ENCODE measurements at regions of chr2 and their contacts with region 1.

Region 1: DNA sequence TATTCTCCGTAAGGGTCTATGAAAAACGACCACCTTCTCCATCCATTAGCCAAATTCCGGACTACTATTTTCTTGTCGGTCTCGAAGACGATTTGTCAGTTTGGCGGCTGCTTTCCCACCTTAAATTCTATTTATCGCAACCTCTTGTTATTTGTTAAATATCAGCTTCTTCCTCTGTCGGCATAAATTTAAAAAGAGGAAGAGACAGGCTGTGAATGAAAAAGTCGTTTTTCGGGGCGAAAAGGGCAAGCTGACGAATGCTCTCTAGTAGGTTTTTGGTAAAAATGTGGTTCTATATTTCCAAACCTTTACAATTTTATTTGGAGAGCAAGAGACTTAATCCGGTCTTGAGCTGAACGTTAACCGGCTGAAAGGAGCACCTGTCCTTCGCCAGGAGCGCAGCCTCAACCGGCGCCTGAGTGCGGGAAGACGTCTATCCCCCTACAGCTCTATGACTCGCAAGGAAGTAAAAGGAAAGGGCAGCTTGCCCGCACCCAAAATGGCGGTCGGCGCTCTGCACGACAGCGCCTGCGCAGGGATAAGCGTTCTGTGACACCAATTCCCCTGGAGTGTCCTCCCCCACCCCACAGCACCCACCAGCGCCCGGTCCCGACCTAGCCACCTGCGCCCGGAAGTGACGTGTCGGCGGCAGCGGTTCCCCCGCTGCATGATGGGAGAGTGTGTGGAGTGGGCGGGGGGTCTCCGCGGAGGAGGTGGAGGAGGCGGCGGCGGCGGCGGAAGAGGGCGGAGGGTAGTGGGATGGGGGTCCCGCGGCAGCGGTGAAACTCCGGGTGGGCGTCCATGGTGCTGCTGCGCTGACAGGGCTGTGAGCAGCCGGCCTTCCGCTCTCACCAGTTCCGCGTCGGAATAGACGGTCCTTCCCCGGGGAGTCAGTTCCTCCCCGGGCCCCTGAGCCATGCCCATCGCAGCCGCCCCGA is at the start of gene AFTPH:
- DNase-seq: peak; percentile 98 to 99 (median 99)
- H3K4me3 ChIP-seq: peak within 1 kb of the TSS; percentile 72 to 95 (median 81)
- H3K4me3 Mint-ChIP-seq: peak within 1 kb of the TSS; percentile 98 to 99
- H3K27ac ChIP-seq: peak within 1 kb of the TSS; percentile 93 to 98
- H3K27ac Mint-ChIP-seq: peak within 1 kb of the TSS; percentile 98 to 100 (median 100)
- H3K4me1 ChIP-seq: peaks cover 29 to 44% of the 10 kb centered on the region in 2 donors
- H3K4me1 Mint-ChIP-seq: peaks cover 33% of the 10 kb centered on the region
- H3K27me3 ChIP-seq: no peaks in the 10 kb centered on the region
- H3K27me3 Mint-ChIP-seq: peaks cover 0 to 1% (median 0%) of the 10 kb centered on the region in 3 donors
- CTCF ChIP-seq: no peak
- polyA plus RNA-seq, gene AFTPH: 22.3 to 28.6 (median 28.4) TPM

Region 2: GRCh38 chr2:64562148-64562784 is 38.3 kb after region 1 on chr2:
- intact Hi-C with region 1: loop called (anchors 2 to 5 kb)
- DNase-seq: peak; percentile 7 to 21 (median 17)
- H3K4me3 ChIP-seq: no peak overlapping the region
- H3K4me3 Mint-ChIP-seq: no peak overlapping the region
- H3K27ac ChIP-seq: peak overlapping the region in 1 of 2 donors; percentile 44
- H3K27ac Mint-ChIP-seq: no peak overlapping the region
- H3K4me1 ChIP-seq: peaks cover 9 to 23% of the 10 kb centered on the region in 2 donors
- H3K4me1 Mint-ChIP-seq: peaks cover 18% of the 10 kb centered on the region
- H3K27me3 ChIP-seq: no peaks in the 10 kb centered on the region
- H3K27me3 Mint-ChIP-seq: no peaks in the 10 kb centered on the region
- CTCF ChIP-seq: peak; percentile 72

Region 3: DNA sequence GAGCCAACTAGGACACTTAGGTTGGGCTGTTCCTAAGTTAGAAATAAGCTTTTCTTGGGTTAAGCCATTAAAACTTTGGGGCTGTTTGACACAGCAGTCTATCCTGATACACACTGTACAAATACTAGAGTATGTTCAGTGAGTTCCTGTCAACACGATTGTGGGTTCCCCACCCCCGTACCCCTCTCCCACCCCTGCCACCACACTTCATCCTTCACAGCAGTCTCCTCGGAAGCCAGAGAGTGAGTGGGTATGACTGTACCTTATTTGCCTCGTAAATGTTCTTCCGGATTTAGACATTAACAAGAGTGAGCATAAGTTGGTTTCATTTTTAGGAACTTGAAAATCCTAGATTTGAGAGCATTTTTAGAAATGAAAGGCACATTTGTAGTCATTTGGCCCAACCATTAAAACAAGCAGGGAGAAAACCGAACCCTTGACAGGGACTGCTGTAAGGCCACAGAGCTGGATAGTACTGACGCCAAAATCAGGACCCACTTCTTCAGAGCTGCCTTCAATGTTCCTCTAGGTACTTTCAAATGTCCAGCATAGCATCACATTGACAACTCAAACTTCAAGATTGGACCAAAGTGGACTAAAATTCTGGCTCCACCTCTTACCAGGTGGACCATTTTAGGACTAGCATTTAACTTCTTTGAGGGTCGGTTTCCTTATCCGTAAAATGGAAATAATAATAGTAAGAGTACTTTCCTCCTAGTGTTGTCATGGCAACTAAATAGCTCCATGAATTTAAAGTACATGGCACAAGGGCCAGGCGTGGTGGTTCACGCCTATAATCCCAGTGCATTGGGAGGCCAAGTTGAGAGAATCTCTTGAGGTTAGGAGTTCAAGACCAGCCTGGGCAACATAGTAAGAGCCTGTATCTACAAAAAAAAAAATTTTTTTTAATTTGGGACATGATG is 296.1 kb after region 1 on chr2:
- intact Hi-C with region 1: no loop called
- DNase-seq: peak; percentile 52 to 67 (median 59)
- H3K4me3 ChIP-seq: peak overlapping the region in 1 of 3 experiments; percentile 22
- H3K4me3 Mint-ChIP-seq: peak overlapping the region; percentile 48
- H3K27ac ChIP-seq: peak overlapping the region; percentile 38 to 86
- H3K27ac Mint-ChIP-seq: peak overlapping the region; percentile 82 to 91 (median 90)
- H3K4me1 ChIP-seq: peaks cover 15 to 24% of the 10 kb centered on the region in 2 donors
- H3K4me1 Mint-ChIP-seq: peaks cover 29% of the 10 kb centered on the region
- H3K27me3 ChIP-seq: no peaks in the 10 kb centered on the region
- H3K27me3 Mint-ChIP-seq: peaks cover 0 to 2% (median 2%) of the 10 kb centered on the region in 3 donors
- CTCF ChIP-seq: no peak

Region 4: DNA sequence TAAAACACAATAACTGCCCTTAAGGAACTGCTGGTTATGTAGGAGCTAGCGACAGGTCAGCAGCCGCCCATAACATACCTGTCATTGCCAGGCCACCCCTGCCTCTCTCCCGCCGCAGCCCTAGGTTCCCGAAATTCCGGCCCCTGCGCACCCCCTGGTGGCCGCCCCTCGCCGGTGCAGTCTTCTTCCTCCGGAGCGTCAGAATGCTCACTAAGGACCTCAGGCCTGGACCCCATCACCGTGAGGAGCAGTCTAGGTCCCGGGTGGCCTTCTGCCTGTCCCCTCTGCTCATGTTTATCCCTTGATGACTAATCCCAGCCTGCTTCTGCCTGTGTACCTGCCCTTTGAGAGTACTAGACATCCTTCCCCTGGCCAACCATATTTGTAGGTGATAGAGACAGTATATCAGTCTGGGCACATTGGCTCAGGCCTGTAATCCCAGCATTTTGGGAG is 349.6 kb after region 1 on chr2:
- intact Hi-C with region 1: loop called (anchors 5 to 10 kb)
- DNase-seq: peak; percentile 62 to 73 (median 70)
- H3K4me3 ChIP-seq: peak overlapping the region in 1 of 3 experiments; percentile 48
- H3K4me3 Mint-ChIP-seq: peak overlapping the region; percentile 47 to 70
- H3K27ac ChIP-seq: no peak overlapping the region
- H3K27ac Mint-ChIP-seq: peak overlapping the region in 2 of 7 donors; percentile 18 to 80
- H3K4me1 ChIP-seq: peaks cover 6 to 8% of the 10 kb centered on the region in 2 donors
- H3K4me1 Mint-ChIP-seq: peaks cover 13% of the 10 kb centered on the region
- H3K27me3 ChIP-seq: no peaks in the 10 kb centered on the region
- H3K27me3 Mint-ChIP-seq: peaks cover 0 to 4% (median 1%) of the 10 kb centered on the region in 3 donors
- CTCF ChIP-seq: peak; percentile 92

Measured in CD14-positive monocyte (primary cell).